HCT116 (cell line): ENCODE measurements at regions of chr7 and their contacts with region 1.

Region 1: GRCh38 chr7:88546808-88547207 is 212.7 kb upstream of the ZNF804B start:
- DNase-seq: peak; percentile 58
- ATAC-seq: peak; percentile 95
- H3K4me3 ChIP-seq: no peak overlapping the region
- H3K27ac ChIP-seq: no peak overlapping the region
- H3K4me1 ChIP-seq: no peaks in the 10 kb centered on the region
- H3K27me3 ChIP-seq: no peaks in the 10 kb centered on the region; the same call in 1 of the 2 replicates
- CTCF ChIP-seq: peak; percentile 64 to 81 (median 67)
- POLR2A ChIP-seq: no peak
- RAD21 ChIP-seq: peak; percentile 89

Region 2: DNA sequence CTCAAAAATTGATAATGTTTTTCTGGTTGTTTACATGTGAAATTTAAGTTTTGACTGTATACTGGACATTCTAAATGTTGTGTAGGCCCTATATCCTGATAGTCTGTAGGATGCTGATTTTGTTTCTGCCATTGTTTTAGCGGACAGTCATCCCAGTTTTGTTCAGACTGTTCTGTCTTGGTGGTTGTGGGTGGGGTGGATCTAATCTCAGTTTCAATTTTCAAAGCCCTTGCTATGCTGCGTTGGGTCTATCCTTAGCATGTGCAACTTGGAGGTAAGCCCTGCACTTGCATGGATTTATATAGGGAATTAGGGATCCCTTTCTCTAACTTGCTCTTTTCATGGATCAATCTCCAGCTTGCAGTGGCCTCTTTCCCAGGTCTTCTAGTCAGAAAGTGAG is 651.4 kb before region 1 on chr7:
- CTCF ChIA-PET with region 1: no interaction called
- POLR2A ChIA-PET with region 1: no interaction called
- RAD21 ChIA-PET with region 1: no interaction called
- intact Hi-C with region 1: no loop called
- DNase-seq: no peak
- ATAC-seq: no peak
- H3K4me3 ChIP-seq: no peak overlapping the region
- H3K27ac ChIP-seq: no peak overlapping the region
- H3K4me1 ChIP-seq: no peaks in the 10 kb centered on the region
- H3K27me3 ChIP-seq: no peaks in the 10 kb centered on the region
- CTCF ChIP-seq: no peak
- POLR2A ChIP-seq: no peak
- RAD21 ChIP-seq: no peak

Region 3: GRCh38 chr7:87933945-87934698 is 612.7 kb before region 1 on chr7 and contains the start of gene ADAM22:
- CTCF ChIA-PET with region 1: no interaction called
- POLR2A ChIA-PET with region 1: no interaction called
- RAD21 ChIA-PET with region 1: no interaction called
- intact Hi-C with region 1: no loop called
- DNase-seq: peak; percentile 87
- ATAC-seq: peak; percentile 97
- H3K4me3 ChIP-seq: peak within 1 kb of the TSS; percentile 79 to 81
- H3K27ac ChIP-seq: peak within 1 kb of the TSS; percentile 46; the same call in 1 of the 2 replicates
- H3K4me1 ChIP-seq: peaks cover 3 to 12% of the 10 kb centered on the region in 2 experiments; a peak in 3 of 4 replicates
- H3K27me3 ChIP-seq: no peaks in the 10 kb centered on the region
- CTCF ChIP-seq: no peak
- POLR2A ChIP-seq: peak; percentile 62
- RAD21 ChIP-seq: no peak; the same call in 1 of the 2 replicates
- total RNA-seq, gene ADAM22: 10.0 TPM

Region 4: GRCh38 chr7:88789480-88790064 is 242.8 kb after region 1 on chr7:
- CTCF ChIA-PET with region 1: interaction called, 3 read pairs
- POLR2A ChIA-PET with region 1: no interaction called
- RAD21 ChIA-PET with region 1: no interaction called
- intact Hi-C with region 1: loop called (anchors 2 kb)
- DNase-seq: peak; percentile 23
- ATAC-seq: peak; percentile 79
- H3K4me3 ChIP-seq: no peak overlapping the region
- H3K27ac ChIP-seq: no peak overlapping the region
- H3K4me1 ChIP-seq: no peaks in the 10 kb centered on the region
- H3K27me3 ChIP-seq: no peaks in the 10 kb centered on the region
- CTCF ChIP-seq: peak; percentile 22 to 63 (median 31); a peak in 4 of 6 replicates
- POLR2A ChIP-seq: no peak
- RAD21 ChIP-seq: peak; percentile 52; the same call in 1 of the 2 replicates

Region 5: GRCh38 chr7:88835147-88835728 is 288.4 kb after region 1 on chr7:
- CTCF ChIA-PET with region 1: interaction called, 18 read pairs
- POLR2A ChIA-PET with region 1: no interaction called
- RAD21 ChIA-PET with region 1: interaction called in 1 of 2 experiments, 6 read pairs
- intact Hi-C with region 1: loop called (anchors 2 kb)
- DNase-seq: peak; percentile 24
- ATAC-seq: no peak; the same call in 1 of the 2 replicates
- H3K4me3 ChIP-seq: no peak overlapping the region
- H3K27ac ChIP-seq: no peak overlapping the region
- H3K4me1 ChIP-seq: no peaks in the 10 kb centered on the region
- H3K27me3 ChIP-seq: no peaks in the 10 kb centered on the region
- CTCF ChIP-seq: peak; percentile 35 to 57 (median 50); a peak in 5 of 6 replicates
- POLR2A ChIP-seq: no peak
- RAD21 ChIP-seq: peak; percentile 48

Region 6: DNA sequence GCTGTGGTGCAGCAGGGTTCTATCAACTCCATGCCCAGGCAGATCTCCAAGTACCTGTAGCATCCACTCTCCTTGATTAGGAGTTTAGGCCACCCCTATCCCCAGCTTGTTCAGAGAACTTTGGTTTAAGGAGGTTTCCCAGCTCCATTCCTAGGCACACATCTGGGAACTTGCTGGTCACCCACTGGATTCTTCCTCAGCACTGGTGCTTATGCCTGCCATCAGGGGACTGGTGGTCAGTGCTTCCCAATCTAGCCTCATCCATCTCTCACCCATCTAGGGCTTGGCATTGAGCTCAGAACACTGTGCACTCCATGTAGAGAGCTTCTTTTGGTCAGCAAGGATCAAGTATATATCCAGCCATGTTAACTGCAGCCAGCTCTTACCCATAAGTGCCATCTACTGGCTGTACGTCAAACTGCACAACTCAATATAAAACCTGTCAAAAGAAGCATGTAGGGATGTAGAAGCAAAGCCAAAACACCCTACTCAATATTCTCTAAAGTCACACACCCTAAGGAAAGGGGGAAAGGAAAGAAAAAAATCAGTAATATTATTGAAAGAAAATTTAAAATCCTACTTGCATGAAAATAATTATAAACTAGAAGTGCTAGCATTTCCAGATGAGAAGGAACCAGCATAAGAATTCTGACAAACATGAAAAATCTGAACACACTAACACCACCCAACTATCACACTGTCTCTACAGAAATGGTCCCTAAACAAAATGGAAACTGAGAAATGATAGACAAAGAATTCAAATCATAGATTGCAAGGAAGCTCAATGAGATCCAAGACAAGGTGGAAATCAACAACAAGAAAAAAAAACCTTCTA is 1076.2 kb after region 1 on chr7:
- CTCF ChIA-PET with region 1: interaction called, 14 read pairs
- POLR2A ChIA-PET with region 1: no interaction called
- RAD21 ChIA-PET with region 1: no interaction called
- intact Hi-C with region 1: loop called (anchors 2 kb)
- DNase-seq: peak; percentile 23
- ATAC-seq: peak; percentile 67
- H3K4me3 ChIP-seq: no peak overlapping the region
- H3K27ac ChIP-seq: no peak overlapping the region
- H3K4me1 ChIP-seq: no peaks in the 10 kb centered on the region
- H3K27me3 ChIP-seq: no peaks in the 10 kb centered on the region
- CTCF ChIP-seq: peak; percentile 24 to 76 (median 71); a peak in 5 of 6 replicates
- POLR2A ChIP-seq: no peak
- RAD21 ChIP-seq: peak; percentile 68

Region 7: DNA sequence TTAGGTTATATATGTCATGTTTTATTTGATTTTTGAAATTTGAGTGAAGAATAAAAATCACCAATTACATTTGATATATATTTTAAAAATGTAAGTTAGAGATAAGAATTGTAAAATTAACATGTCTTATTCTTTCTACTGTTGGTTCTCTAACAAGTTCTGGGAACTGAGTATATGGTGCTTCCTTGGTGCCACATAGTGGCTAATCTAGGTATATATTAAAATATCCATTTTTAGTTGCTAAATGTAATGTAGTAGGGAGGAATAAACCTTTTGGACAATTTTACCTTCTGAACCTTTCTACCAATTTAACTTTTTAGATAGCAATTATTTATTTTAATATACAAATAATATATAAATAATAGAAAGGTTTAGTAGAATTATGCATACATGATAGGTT is 1715.6 kb after region 1 on chr7:
- CTCF ChIA-PET with region 1: no interaction called
- POLR2A ChIA-PET with region 1: no interaction called
- RAD21 ChIA-PET with region 1: no interaction called
- intact Hi-C with region 1: loop called (anchors 5 kb)
- DNase-seq: peak; percentile 15
- ATAC-seq: peak; percentile 79
- H3K4me3 ChIP-seq: no peak overlapping the region
- H3K27ac ChIP-seq: no peak overlapping the region
- H3K4me1 ChIP-seq: no peaks in the 10 kb centered on the region
- H3K27me3 ChIP-seq: no peaks in the 10 kb centered on the region
- CTCF ChIP-seq: peak; percentile 35 to 85 (median 50); a peak in 5 of 6 replicates
- POLR2A ChIP-seq: no peak
- RAD21 ChIP-seq: peak; percentile 84

Region 8: GRCh38 chr7:90424720-90425119 is 1877.9 kb after region 1 on chr7:
- CTCF ChIA-PET with region 1: interaction called, 3 read pairs
- POLR2A ChIA-PET with region 1: no interaction called
- RAD21 ChIA-PET with region 1: no interaction called
- intact Hi-C with region 1: loop called (anchors 2 kb)
- DNase-seq: no peak
- ATAC-seq: no peak
- H3K4me3 ChIP-seq: no peak overlapping the region
- H3K27ac ChIP-seq: no peak overlapping the region
- H3K4me1 ChIP-seq: peaks cover 0 to 5% of the 10 kb centered on the region in 2 experiments; a peak in 1 of 4 replicates
- H3K27me3 ChIP-seq: no peaks in the 10 kb centered on the region
- CTCF ChIP-seq: no peak
- POLR2A ChIP-seq: no peak
- RAD21 ChIP-seq: no peak